ENCODE measurements at regions of chr9 and their contacts with region 1.

Region 1: GRCh38 chr9:35696525-35697215 is 6.9 kb upstream of the TPM2 start:
- DNase-seq: peak; percentile 71
- H3K4me3 Mint-ChIP-seq: no peak overlapping the region
- H3K27ac Mint-ChIP-seq: no peak overlapping the region
- H3K4me1 Mint-ChIP-seq: peaks cover 2% of the 10 kb centered on the region
- H3K27me3 Mint-ChIP-seq: no peaks in the 10 kb centered on the region

Region 2: DNA sequence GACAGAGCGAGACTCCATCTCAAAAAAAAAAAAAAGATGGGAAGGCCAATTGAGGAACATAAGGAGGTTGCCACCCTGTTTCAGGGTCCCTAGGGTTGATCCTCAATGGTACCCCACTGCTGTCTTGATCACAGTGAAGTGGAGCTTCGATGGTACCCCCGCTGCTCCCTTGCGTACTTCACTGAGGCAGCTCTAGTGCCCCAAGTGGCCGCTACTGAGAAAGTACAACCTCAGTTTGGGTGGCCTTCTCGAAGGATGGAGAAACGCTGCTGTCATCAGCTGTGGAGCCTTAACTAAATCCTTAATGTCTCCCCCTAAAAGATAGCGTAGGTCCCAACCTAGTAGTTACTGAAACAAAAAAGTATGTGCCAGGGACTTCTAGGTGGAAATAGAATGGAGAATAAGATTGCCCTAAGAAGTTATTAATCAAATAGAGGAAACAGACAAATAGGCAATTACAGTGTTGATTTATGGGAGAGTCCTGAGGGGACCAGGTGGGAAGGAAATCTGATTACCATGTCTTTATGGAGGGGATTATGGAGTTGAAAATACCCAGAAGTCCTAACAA is 85.4 kb before region 1 on chr9:
- CTCF ChIA-PET with region 1: interaction called, 30 read pairs
- POLR2A ChIA-PET with region 1: no interaction called
- intact Hi-C with region 1: no loop called
- DNase-seq: peak; percentile 69
- H3K4me3 Mint-ChIP-seq: no peak overlapping the region
- H3K27ac Mint-ChIP-seq: no peak overlapping the region
- H3K4me1 Mint-ChIP-seq: peaks cover 12% of the 10 kb centered on the region
- H3K27me3 Mint-ChIP-seq: no peaks in the 10 kb centered on the region

Region 3: DNA sequence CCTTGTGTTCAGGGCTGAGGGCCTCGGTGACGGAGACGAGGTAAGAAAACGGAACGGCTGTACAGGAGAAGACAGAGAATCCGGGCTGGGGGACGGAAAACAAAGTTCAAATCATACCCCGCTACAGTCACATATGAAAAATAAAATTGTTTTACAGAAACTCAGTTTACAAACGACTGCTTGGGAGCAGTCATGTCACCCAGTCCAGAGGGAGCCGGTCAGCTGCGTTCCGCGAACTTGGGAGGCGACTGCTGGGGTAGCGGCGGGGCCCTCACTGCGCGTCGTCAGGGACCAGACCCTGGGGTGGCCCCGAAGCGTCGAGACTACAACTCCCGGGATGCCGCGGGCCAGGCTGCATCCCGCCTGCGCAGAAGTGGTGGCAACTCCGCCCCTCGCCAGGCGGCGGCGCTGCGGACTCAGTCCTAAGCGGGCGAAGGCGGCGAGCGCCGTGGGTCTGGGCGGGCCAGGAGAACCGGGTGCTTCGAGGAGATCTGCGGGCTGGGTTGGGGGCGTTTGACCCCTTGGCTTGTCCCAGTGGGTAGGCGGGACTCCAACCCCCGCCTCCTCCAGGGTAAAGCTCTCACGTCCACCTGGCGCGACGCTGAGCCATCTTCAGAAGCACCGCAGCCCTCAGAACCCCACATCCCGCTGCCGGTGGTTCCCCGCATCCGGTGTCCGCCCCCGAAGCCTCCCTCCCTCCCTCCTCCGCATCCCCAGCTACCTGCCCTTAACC is 50.0 kb before region 1 on chr9:
- CTCF ChIA-PET with region 1: interaction called, 30 read pairs
- POLR2A ChIA-PET with region 1: interaction called, 4 read pairs
- intact Hi-C with region 1: no loop called
- DNase-seq: peak; percentile 95
- H3K4me3 Mint-ChIP-seq: peak overlapping the region; percentile 91
- H3K27ac Mint-ChIP-seq: peak overlapping the region; percentile 93
- H3K4me1 Mint-ChIP-seq: peaks cover 49% of the 10 kb centered on the region
- H3K27me3 Mint-ChIP-seq: no peaks in the 10 kb centered on the region

Region 4: DNA sequence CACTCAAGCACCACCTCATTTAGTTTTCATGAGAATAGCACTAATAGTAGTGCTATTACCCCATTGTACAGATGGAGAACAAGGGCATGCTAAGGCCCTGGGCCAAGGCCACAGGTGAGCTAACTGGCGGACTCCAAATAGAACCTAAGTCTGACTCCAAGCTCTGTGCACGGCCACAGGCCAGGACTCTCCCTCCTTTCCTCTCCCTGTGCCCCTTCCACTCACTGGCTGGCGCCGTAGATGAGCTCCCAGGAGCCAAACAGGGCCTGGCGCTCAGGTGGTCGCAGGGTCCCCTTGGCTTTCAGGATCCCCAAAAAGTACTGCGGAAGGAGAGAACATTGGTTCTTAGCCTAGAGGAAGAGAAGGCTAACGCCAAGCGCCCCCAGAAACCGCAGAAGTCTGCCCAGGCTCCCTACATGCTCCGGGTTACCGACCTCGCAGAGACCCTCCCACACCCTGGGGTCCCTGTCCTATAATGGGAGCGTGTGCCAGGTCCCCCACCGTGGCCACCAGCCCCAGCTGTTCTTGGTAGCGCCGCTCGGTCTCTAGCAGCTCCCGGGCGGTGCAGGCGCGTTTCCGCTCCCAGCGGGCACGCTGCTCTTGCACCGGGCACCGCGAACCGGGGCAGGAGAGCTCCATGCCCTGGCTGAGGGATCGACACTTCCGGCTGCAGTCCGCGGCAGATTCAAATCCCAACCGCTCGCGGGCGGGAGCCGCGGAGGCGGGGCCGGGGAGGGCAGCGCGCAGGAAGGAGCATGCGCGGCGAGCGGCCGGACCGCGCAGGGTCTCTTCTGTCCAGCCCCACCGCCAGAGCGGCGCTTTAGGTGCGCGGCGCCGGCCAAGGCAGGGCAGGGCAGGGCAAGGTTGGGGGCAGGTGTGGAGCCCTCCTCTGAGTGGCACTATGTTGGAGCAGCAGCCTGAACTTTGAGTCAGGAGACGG is 31.9 kb before region 1 on chr9 and contains the start of gene ARHGEF39:
- CTCF ChIA-PET with region 1: interaction called, 37 read pairs
- POLR2A ChIA-PET with region 1: no interaction called
- intact Hi-C with region 1: no loop called
- DNase-seq: peak; percentile 89
- H3K4me3 Mint-ChIP-seq: peak within 1 kb of the TSS; percentile 84
- H3K27ac Mint-ChIP-seq: peak within 1 kb of the TSS; percentile 73
- H3K4me1 Mint-ChIP-seq: peaks cover 53% of the 10 kb centered on the region
- H3K27me3 Mint-ChIP-seq: no peaks in the 10 kb centered on the region
- total RNA-seq, gene ARHGEF39: 28.1 to 28.2 TPM

Region 5: DNA sequence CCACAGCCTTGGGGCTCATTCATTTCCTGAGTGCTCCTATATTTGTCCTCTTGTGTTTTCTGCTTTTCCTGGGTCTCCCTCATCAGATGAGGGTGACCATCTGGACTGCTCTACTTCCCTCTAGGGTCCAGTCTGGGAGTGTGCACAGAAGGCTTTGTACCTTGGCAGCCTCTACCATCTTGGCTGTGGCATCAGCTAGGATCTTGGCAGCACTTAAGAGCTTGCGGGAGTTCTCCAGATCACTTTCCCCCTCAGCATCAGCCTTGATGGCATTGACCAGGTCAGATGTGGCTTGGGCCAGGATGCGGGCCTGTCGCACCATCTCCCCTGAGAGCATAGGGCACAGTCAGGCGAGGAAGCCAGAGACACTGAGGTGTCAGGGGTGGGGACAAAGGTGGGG is 19.6 kb after region 1 on chr9:
- CTCF ChIA-PET with region 1: interaction called, 55 read pairs
- POLR2A ChIA-PET with region 1: interaction called, 3 read pairs
- intact Hi-C with region 1: no loop called
- DNase-seq: no peak
- H3K4me3 Mint-ChIP-seq: no peak overlapping the region
- H3K27ac Mint-ChIP-seq: no peak overlapping the region
- H3K4me1 Mint-ChIP-seq: peaks cover 15% of the 10 kb centered on the region
- H3K27me3 Mint-ChIP-seq: no peaks in the 10 kb centered on the region

Region 6: GRCh38 chr9:35839926-35840325 is 143.3 kb after region 1 on chr9:
- CTCF ChIA-PET with region 1: no interaction called
- POLR2A ChIA-PET with region 1: no interaction called
- intact Hi-C with region 1: no loop called
- DNase-seq: no peak
- H3K4me3 Mint-ChIP-seq: no peak overlapping the region
- H3K27ac Mint-ChIP-seq: no peak overlapping the region
- H3K4me1 Mint-ChIP-seq: peaks cover 10% of the 10 kb centered on the region
- H3K27me3 Mint-ChIP-seq: no peaks in the 10 kb centered on the region

Region 7: GRCh38 chr9:37415011-37415719 is 1718.5 kb after region 1 on chr9:
- CTCF ChIA-PET with region 1: no interaction called
- POLR2A ChIA-PET with region 1: interaction called, 11 read pairs
- intact Hi-C with region 1: no loop called
- DNase-seq: peak; percentile 88
- H3K4me3 Mint-ChIP-seq: no peak overlapping the region
- H3K27ac Mint-ChIP-seq: no peak overlapping the region
- H3K4me1 Mint-ChIP-seq: peaks cover 34% of the 10 kb centered on the region
- H3K27me3 Mint-ChIP-seq: peaks cover 11% of the 10 kb centered on the region

Measured in activated CD4-positive, alpha-beta memory T cell treated with anti-CD3 and anti-CD28 coated beads for 36 hours (primary cell).